ENCODE measurements at regions of chr22 and their contacts with region 1.

Region 1: DNA sequence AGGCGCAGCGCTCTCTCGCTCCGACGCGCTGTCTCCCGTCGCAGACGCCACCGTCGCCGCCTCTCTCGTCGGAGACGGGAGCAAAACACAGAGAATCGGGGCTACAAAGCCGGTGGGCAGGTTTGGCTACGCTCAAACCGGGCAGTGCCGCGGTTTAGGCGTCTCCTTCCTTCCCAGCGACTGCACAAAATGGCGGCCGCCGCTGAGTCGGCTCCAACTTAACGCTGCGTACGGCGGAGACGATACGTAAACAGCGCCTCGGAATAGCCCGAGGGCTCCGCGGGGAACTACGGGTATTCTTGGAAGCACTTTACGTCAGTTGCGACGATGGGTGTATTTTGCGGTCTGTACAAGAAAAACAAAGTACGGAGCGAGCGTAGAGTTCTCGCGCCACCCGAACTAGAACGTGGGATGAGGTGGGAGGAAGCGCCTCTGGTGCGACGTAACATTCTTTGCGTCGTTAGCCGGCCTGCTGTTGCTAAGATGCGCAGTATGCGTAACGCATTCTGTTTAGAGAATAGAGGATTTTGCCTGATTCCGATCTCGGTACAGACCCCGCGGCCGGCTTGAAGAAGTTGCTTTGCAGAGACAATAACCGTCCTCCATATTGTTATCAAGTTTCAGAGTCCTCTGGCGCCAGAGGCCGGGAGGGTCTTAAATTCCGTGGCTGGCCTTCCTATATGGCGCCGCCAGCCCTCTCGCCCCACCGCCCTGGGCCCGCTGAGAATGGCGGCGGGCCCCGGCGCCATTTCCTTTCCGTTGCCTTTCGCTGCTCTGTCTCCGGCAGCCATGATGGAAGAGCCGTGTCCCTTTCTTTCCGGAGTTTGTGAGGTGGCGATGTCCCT is at the start of gene DDX17:
- DNase-seq: peak; percentile 92
- ATAC-seq: peak; percentile 84
- H3K4me3 ChIP-seq: peak within 1 kb of the TSS; percentile 96
- H3K27ac ChIP-seq: peak within 1 kb of the TSS; percentile 86
- H3K4me1 ChIP-seq: no peaks in the 10 kb centered on the region; the same call in none of the 2 replicates
- H3K27me3 ChIP-seq: no peaks in the 10 kb centered on the region
- CTCF ChIP-seq: no peak
- EP300 ChIP-seq: no peak
- POLR2A ChIP-seq: peak; percentile 84
- RAD21 ChIP-seq: no peak
- polyA plus RNA-seq, gene DDX17: 47.1 to 91.4 TPM

Region 2: GRCh38 chr22:38291201-38291777 is 215.1 kb before region 1 on chr22:
- CTCF ChIA-PET with region 1: no interaction called
- POLR2A ChIA-PET with region 1: no interaction called
- RAD21 ChIA-PET with region 1: no interaction called
- SMC1A ChIA-PET with region 1: no interaction called
- in situ Hi-C with region 1: no loop called
- intact Hi-C with region 1: no loop called
- DNase-seq: no peak
- ATAC-seq: no peak
- H3K4me3 ChIP-seq: no peak overlapping the region
- H3K27ac ChIP-seq: no peak overlapping the region
- H3K4me1 ChIP-seq: no peaks in the 10 kb centered on the region
- H3K27me3 ChIP-seq: no peaks in the 10 kb centered on the region
- CTCF ChIP-seq: no peak
- EP300 ChIP-seq: no peak
- POLR2A ChIP-seq: peak; percentile 37; the same call in 1 of the 2 replicates
- RAD21 ChIP-seq: no peak

Region 3: DNA sequence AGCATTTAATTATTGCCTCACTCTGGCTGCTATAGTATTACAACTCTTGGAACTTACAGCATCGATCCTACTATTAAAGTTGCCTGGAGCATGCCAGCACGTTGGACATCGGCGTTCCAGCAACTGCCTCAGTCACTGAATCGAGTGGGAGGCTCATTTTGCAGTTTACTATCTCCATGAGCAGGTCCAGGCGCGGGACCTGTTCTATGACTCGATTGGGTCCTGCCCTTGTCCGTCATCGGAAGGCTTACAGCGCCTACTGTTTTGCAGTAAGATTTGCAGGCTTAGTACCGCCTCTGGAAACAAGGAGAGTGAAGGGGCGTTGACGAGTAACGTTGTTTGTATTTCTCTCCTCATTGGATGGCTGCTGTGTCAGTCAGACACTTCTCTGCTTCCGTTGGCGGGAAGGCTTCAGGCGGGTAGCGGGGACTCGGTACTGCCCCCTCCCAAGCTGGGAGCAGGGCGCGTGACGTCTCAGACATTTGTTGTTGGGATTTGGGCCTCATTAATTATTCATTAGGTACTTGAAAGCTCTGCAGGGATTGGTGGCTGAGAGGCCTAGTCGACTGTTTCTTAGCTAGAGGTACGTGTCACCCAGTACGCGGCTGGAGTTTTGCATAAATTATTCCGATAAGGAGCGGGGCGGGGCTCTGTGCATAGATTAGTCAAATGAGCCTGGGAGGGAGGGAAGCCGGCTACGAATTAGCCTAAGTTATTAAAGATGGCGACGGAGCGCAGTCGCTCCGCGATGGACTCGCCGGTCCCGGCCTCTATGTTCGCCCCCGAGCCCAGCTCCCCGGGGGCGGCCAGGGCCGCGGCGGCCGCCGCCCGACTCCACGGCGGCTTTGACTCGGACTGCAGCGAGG is 199.1 kb after region 1 on chr22 and contains the start of gene GTPBP1:
- CTCF ChIA-PET with region 1: no interaction called
- POLR2A ChIA-PET with region 1: interaction called, 3 read pairs
- RAD21 ChIA-PET with region 1: no interaction called
- SMC1A ChIA-PET with region 1: no interaction called
- in situ Hi-C with region 1: no loop called
- intact Hi-C with region 1: loop called (anchors 10 kb)
- DNase-seq: peak; percentile 100
- ATAC-seq: peak; percentile 85
- H3K4me3 ChIP-seq: peak within 1 kb of the TSS; percentile 95
- H3K27ac ChIP-seq: peak within 1 kb of the TSS; percentile 85
- H3K4me1 ChIP-seq: peaks cover 25% of the 10 kb centered on the region
- H3K27me3 ChIP-seq: no peaks in the 10 kb centered on the region
- CTCF ChIP-seq: no peak
- EP300 ChIP-seq: peak in 1 of 2 experiments; percentile 18; a peak in 1 of 4 replicates
- POLR2A ChIP-seq: peak; percentile 79
- RAD21 ChIP-seq: no peak
- polyA plus RNA-seq, gene GTPBP1: 0.89 to 1.9 TPM

Measured in GM12878 (cell line).